Endothelial cell of umbilical vein (primary cell): ENCODE measurements at regions of chr4 and their contacts with region 1.

Region 1: GRCh38 chr4:185534866-185535611 is at the start of gene PDLIM3:
- DNase-seq: peak; percentile 65
- H3K4me3 ChIP-seq: peak within 1 kb of the TSS; percentile 78 to 83 (median 81)
- H3K27ac ChIP-seq: peak within 1 kb of the TSS; percentile 56
- H3K4me1 ChIP-seq: peaks cover 10% of the 10 kb centered on the region
- H3K27me3 ChIP-seq: peaks cover 0 to 6% of the 10 kb centered on the region in 2 experiments
- CTCF ChIP-seq: no peak
- POLR2A ChIP-seq: peak; percentile 53
- total RNA-seq, gene PDLIM3: 9.7 and 12.2 TPM in 2 replicates

Region 2: DNA sequence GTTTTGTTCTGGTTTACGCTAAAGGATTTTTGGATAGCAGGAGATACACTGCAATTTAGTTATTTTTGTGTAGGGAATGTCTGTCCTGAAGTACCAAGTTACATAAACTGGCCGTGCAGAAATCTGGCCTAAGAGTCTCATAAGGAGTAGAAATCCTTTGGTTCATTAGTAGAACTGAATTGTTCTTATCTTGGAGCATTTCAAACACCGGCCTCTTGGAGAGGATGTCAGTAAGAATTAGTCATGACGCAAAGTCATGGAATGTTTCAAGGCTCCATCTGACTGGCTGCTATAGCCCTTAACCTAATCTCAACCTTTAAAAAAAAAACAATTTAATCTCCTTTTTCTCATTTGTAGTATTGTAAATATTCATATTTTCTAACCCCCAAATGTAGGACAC is 14.9 kb before region 1 on chr4:
- CTCF ChIA-PET with region 1: interaction called, 24 read pairs
- POLR2A ChIA-PET with region 1: interaction called, 6 read pairs
- dilution Hi-C with region 1: no loop called
- intact Hi-C with region 1: no loop called
- DNase-seq: peak; percentile 70
- H3K4me3 ChIP-seq: no peak overlapping the region
- H3K27ac ChIP-seq: no peak overlapping the region
- H3K4me1 ChIP-seq: peaks cover 20% of the 10 kb centered on the region
- H3K27me3 ChIP-seq: no peaks in the 10 kb centered on the region
- CTCF ChIP-seq: no peak
- POLR2A ChIP-seq: no peak

Region 3: DNA sequence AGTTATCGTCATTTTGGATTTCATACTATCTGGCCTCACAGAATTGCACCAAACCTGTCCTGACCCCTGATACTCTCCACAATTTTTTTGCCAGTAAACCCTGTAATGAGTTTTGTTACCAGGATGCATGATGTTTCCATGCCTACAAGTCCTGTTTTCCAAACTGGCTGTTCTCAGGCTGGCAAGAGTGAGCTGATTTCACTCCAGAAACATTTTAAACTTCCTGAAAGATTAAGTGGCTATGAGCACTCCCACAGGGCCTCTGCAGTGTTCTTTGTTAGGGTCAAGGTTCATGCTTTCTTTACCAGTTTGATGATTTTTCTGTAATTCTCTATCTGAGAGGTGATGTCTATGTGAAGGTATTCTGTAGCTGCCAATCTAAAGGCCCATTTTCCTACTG is 31.9 kb after region 1 on chr4:
- CTCF ChIA-PET with region 1: no interaction called
- POLR2A ChIA-PET with region 1: interaction called, 3 read pairs
- dilution Hi-C with region 1: no loop called
- intact Hi-C with region 1: loop called (anchors 2 kb)
- DNase-seq: peak; percentile 93
- H3K4me3 ChIP-seq: no peak overlapping the region
- H3K27ac ChIP-seq: peak overlapping the region; percentile 87
- H3K4me1 ChIP-seq: peaks cover 17% of the 10 kb centered on the region
- H3K27me3 ChIP-seq: no peaks in the 10 kb centered on the region
- CTCF ChIP-seq: no peak
- POLR2A ChIP-seq: no peak

Region 4: GRCh38 chr4:185590982-185591381 is 55.9 kb after region 1 on chr4:
- CTCF ChIA-PET with region 1: no interaction called
- POLR2A ChIA-PET with region 1: no interaction called
- dilution Hi-C with region 1: no loop called
- intact Hi-C with region 1: no loop called
- DNase-seq: no peak
- H3K4me3 ChIP-seq: no peak overlapping the region
- H3K27ac ChIP-seq: no peak overlapping the region
- H3K4me1 ChIP-seq: no peaks in the 10 kb centered on the region
- H3K27me3 ChIP-seq: no peaks in the 10 kb centered on the region
- CTCF ChIP-seq: no peak
- POLR2A ChIP-seq: no peak

Region 5: GRCh38 chr4:185608185-185608584 is 73.1 kb after region 1 on chr4:
- CTCF ChIA-PET with region 1: no interaction called
- POLR2A ChIA-PET with region 1: no interaction called
- dilution Hi-C with region 1: no loop called
- intact Hi-C with region 1: no loop called
- DNase-seq: no peak
- H3K4me3 ChIP-seq: no peak overlapping the region
- H3K27ac ChIP-seq: no peak overlapping the region
- H3K4me1 ChIP-seq: no peaks in the 10 kb centered on the region
- H3K27me3 ChIP-seq: no peaks in the 10 kb centered on the region
- CTCF ChIP-seq: no peak
- POLR2A ChIP-seq: no peak